GM12878 (cell line): ENCODE measurements at regions of chr10 and their contacts with region 1.

Region 1: GRCh38 chr10:51699475-51700227 is at the start of gene CSTF2T:
- DNase-seq: peak; percentile 78
- ATAC-seq: peak; percentile 91
- H3K4me3 ChIP-seq: peak within 1 kb of the TSS; percentile 95
- H3K27ac ChIP-seq: peak within 1 kb of the TSS; percentile 97
- H3K4me1 ChIP-seq: peaks cover 6% of the 10 kb centered on the region; the same call in 1 of the 2 replicates
- H3K27me3 ChIP-seq: no peaks in the 10 kb centered on the region
- CTCF ChIP-seq: no peak
- EP300 ChIP-seq: peak in 1 of 2 experiments; percentile 72; a peak in 2 of 4 replicates
- POLR2A ChIP-seq: peak; percentile 84
- RAD21 ChIP-seq: no peak
- polyA plus RNA-seq, gene CSTF2T: 6.8 to 9.1 TPM

Region 2: GRCh38 chr10:50653142-50653541 is 1046.5 kb before region 1 on chr10:
- CTCF ChIA-PET with region 1: no interaction called
- POLR2A ChIA-PET with region 1: no interaction called
- RAD21 ChIA-PET with region 1: no interaction called
- SMC1A ChIA-PET with region 1: no interaction called
- in situ Hi-C with region 1: loop called (anchors 10 kb)
- intact Hi-C with region 1: no loop called
- DNase-seq: no peak
- ATAC-seq: peak; percentile 27
- H3K4me3 ChIP-seq: no peak overlapping the region
- H3K27ac ChIP-seq: no peak overlapping the region
- H3K4me1 ChIP-seq: peaks cover 28% of the 10 kb centered on the region
- H3K27me3 ChIP-seq: no peaks in the 10 kb centered on the region
- CTCF ChIP-seq: peak; percentile 16 to 66 (median 53); a peak in 4 of 6 replicates
- EP300 ChIP-seq: no peak
- POLR2A ChIP-seq: no peak
- RAD21 ChIP-seq: peak; percentile 45